Calu3 (cell line): ENCODE measurements at regions of chr5 and their contacts with region 1.

Region 1: DNA sequence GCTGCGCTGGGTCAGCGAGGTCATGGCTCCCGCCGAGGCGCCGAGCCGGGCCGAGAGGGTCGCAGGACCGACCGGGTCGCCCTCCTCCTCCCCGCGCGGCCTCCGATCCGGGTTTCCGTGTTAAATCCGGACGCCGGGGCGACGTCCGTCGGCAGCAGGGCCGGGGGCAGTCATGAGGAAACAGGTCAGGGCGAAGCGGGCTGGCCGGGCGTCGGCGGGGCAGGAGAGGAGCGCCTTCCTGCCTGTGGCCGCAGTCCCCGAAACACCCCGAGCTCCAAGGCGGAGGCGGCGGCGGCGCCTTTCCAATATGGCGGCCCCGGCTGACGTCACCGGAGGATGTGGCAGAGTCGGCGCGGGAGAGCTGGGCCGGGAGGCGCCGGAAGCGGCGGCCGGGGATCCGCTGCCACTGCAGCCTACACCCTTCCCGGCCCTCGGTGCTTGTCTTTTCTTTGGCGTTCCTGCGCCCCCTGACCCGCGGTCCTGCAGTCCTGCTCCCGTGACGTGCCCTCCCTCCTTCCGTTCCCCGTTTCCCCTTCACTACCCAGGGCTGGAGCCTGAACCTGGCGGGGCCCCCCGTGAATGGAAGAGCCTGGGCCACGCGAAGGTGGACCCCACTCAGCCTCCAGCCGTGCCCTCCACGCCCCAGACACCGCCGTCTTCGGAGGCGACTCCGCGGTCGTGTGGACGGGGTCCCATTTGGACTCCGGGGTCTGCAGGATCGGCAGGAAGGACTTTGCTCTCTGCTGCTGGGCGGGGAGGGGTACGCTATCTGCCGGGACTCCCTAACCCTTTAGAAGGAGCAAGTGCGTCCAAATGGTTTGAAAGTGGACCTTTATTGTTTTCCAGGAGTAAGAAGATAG is at the start of gene GOLPH3:
- DNase-seq: peak; percentile 96
- H3K4me3 Mint-ChIP-seq: peak within 1 kb of the TSS; percentile 97
- H3K27ac Mint-ChIP-seq: peak within 1 kb of the TSS; percentile 99
- H3K4me1 Mint-ChIP-seq: peaks cover 23% of the 10 kb centered on the region
- H3K27me3 Mint-ChIP-seq: no peaks in the 10 kb centered on the region
- CTCF ChIP-seq: no peak
- total RNA-seq, gene GOLPH3: 115 and 123 TPM in 2 replicates

Region 2: DNA sequence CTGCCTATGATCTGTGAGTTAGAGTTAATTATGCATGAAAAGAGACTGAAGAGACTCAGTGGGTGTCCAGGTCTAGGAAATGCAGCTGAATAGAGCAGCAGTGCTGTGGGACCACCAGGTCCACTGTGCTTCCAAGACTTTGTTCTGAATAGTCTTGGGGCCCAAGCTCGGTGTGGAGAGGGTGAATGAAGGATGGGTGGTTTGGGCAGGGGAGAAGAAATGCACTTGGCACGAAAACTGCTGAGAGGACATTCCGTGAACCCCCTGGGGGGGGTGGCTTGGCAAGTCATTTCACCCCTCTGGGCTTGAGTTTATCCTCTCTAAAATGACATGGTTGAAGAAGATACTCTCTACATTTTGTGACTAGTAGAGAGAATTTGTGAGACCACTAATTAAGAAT is 35.9 kb after region 1 on chr5:
- CTCF ChIA-PET with region 1: no interaction called
- intact Hi-C with region 1: loop called (anchors 5 kb)
- DNase-seq: no peak
- H3K4me3 Mint-ChIP-seq: no peak overlapping the region
- H3K27ac Mint-ChIP-seq: peak overlapping the region; percentile 81
- H3K4me1 Mint-ChIP-seq: peaks cover 35% of the 10 kb centered on the region
- H3K27me3 Mint-ChIP-seq: no peaks in the 10 kb centered on the region
- CTCF ChIP-seq: no peak

Region 3: DNA sequence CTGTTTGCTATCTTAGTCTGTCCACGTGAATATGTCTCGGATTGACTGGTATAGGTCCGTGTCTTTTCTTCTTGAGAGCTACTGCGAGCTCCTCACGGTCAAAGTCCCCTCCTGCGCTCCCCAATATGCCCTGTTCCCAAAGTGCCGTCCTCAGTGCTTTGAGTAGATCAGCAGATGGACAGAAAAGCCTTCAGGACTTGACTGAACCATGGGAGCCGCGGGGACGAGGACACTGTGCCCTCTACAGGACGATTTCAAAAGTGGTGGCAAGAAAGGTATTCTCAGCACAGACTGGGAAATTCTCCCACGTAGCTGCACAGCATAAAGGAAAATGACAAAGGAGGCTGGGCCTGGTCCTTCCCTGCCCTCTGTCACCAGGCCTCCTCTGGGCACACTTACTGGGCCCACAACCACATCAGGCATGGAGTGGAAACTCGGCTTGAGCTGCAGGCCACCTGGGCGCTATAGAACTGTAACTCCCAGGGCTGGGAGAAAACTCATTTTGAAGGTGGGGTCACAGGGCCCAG is 155.1 kb after region 1 on chr5:
- CTCF ChIA-PET with region 1: no interaction called
- intact Hi-C with region 1: loop called (anchors 2 kb)
- DNase-seq: peak; percentile 76
- H3K4me3 Mint-ChIP-seq: no peak overlapping the region
- H3K27ac Mint-ChIP-seq: peak overlapping the region; percentile 44
- H3K4me1 Mint-ChIP-seq: peaks cover 53% of the 10 kb centered on the region
- H3K27me3 Mint-ChIP-seq: no peaks in the 10 kb centered on the region
- CTCF ChIP-seq: peak; percentile 50